Esophagus muscularis mucosa (tissue), 4 donors: ENCODE measurements at regions of chr16 and their contacts with region 1.

Region 1: GRCh38 chr16:66894948-66895688 is 14.8 kb downstream of the PDP2 start:
- DNase-seq: no peak
- H3K4me3 ChIP-seq: no peak overlapping the region
- H3K27ac ChIP-seq: peak overlapping the region in 1 of 4 donors; percentile 33
- H3K4me1 ChIP-seq: peaks cover 17 to 37% (median 32%) of the 10 kb centered on the region in 4 donors
- H3K27me3 ChIP-seq: no peaks in the 10 kb centered on the region
- CTCF ChIP-seq: peak; percentile 76 to 86 (median 84)
- EP300 ChIP-seq: no peak
- POLR2A ChIP-seq: no peak

Region 2: GRCh38 chr16:66928702-66929388 is 33.7 kb after region 1 on chr16:
- intact Hi-C with region 1: loop called (anchors 1 kb)
- DNase-seq: no peak
- H3K4me3 ChIP-seq: no peak overlapping the region
- H3K27ac ChIP-seq: peak overlapping the region in 1 of 4 donors; percentile 37
- H3K4me1 ChIP-seq: peaks cover 38 to 70% (median 62%) of the 10 kb centered on the region in 4 donors
- H3K27me3 ChIP-seq: peaks cover 0 to 2% (median 0%) of the 10 kb centered on the region in 4 donors
- CTCF ChIP-seq: peak; percentile 28 to 44 (median 44)
- EP300 ChIP-seq: no peak
- POLR2A ChIP-seq: no peak

Region 3: GRCh38 chr16:67000384-67001351 is 105.5 kb after region 1 on chr16:
- intact Hi-C with region 1: no loop called
- DNase-seq: no peak
- H3K4me3 ChIP-seq: peak overlapping the region; percentile 57 to 70 (median 61)
- H3K27ac ChIP-seq: peak overlapping the region; percentile 55 to 71 (median 64)
- H3K4me1 ChIP-seq: peaks cover 33 to 44% (median 41%) of the 10 kb centered on the region in 4 donors
- H3K27me3 ChIP-seq: peaks cover 0 to 4% (median 0%) of the 10 kb centered on the region in 4 donors
- CTCF ChIP-seq: no peak
- EP300 ChIP-seq: peak; percentile 56
- POLR2A ChIP-seq: no peak